MCF 10A (cell line): ENCODE measurements at regions of chr5 and their contacts with region 1.

Region 1: GRCh38 chr5:76805850-76806505 is 12.9 kb upstream of the F2RL1 start:
- DNase-seq: peak; percentile 90
- H3K4me3 Mint-ChIP-seq: no peak overlapping the region
- H3K27ac Mint-ChIP-seq: peak overlapping the region; percentile 69
- H3K4me1 Mint-ChIP-seq: peaks cover 25% of the 10 kb centered on the region
- H3K27me3 Mint-ChIP-seq: no peaks in the 10 kb centered on the region
- CTCF ChIP-seq: no peak

Region 2: DNA sequence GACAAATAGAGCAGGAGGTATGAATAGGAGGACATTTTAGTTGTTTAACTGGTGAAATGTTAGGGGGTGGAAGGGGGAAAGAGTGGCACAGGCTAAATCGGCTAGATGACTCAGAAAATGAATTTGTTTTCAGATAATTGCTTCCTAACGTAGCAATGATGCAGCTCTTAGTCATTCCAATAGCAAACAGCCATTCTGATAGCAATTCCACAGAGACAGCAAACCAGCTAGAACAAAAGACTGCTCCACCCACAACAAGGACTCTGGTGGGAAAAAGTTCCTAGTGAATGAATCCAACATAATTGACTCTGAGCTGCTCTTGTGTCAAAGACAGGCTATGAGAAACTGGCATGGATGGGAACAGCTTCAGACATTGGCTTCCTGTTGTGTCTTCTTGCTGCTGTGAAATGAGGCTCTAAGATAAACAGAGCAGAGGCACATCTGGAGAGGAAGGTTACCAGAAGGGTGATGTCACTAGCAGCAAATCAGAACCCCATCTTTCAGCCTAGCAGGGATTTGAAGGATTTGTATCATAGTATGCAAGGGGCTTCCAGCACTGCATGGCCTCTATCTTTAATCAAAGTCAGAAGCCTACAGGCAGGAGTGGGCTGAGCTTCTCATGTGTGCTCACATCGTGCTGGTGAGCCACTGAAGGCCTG is 15.2 kb before region 1 on chr5:
- CTCF ChIA-PET with region 1: interaction called, 4 read pairs
- POLR2A ChIA-PET with region 1: interaction called, 31 read pairs
- intact Hi-C with region 1: no loop called
- DNase-seq: peak; percentile 92
- H3K4me3 Mint-ChIP-seq: peak overlapping the region; percentile 33
- H3K27ac Mint-ChIP-seq: peak overlapping the region; percentile 96
- H3K4me1 Mint-ChIP-seq: peaks cover 32% of the 10 kb centered on the region
- H3K27me3 Mint-ChIP-seq: no peaks in the 10 kb centered on the region
- CTCF ChIP-seq: no peak

Region 3: GRCh38 chr5:76818844-76819831 is 13.2 kb after region 1 on chr5 and contains the start of gene F2RL1:
- CTCF ChIA-PET with region 1: interaction called, 6 read pairs
- POLR2A ChIA-PET with region 1: interaction called, 42 read pairs
- intact Hi-C with region 1: no loop called
- DNase-seq: peak; percentile 94
- H3K4me3 Mint-ChIP-seq: peak within 1 kb of the TSS; percentile 91
- H3K27ac Mint-ChIP-seq: peak within 1 kb of the TSS; percentile 79
- H3K4me1 Mint-ChIP-seq: peaks cover 30% of the 10 kb centered on the region
- H3K27me3 Mint-ChIP-seq: no peaks in the 10 kb centered on the region
- CTCF ChIP-seq: no peak
- total RNA-seq, gene F2RL1: 30.7 and 34.9 TPM in 2 replicates